Sigmoid colon (tissue), 7 donors: ENCODE measurements at regions of chr1 and their contacts with region 1.

Region 1: DNA sequence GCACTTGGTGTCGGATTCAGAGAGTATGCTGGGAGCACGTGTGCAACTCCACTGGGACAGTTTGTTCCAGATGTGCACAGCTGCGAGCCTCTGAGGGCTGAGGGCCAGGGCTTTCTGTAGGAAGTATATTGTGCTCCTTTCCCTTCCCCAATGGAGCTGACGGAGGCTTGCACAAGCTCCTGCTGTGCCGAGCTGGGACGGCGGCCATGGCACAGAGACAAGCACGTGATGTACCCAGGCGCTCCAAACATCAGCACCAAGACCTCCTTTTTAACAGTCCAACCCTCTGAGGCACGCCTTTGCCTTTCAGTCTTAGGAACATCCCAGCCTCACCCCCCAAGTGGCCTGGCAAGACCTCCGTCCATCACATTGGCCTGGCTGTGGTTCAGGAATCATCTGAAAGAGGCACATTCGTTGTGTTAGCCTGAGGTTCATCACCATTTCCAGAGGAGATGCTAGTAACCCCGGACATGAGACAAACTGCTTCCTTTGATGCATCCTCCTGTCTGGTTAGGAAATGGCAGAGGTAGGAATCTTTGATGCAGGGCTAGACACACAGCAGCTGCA is 339.2 kb upstream of the KAZN start:
- DNase-seq: peak; percentile 97
- H3K4me3 ChIP-seq: no peak overlapping the region
- H3K27ac ChIP-seq: peak overlapping the region; percentile 52 to 57 (median 54)
- H3K4me1 ChIP-seq: peaks cover 0 to 8% (median 0%) of the 10 kb centered on the region in 4 donors
- H3K27me3 ChIP-seq: no peaks in the 10 kb centered on the region
- CTCF ChIP-seq: no peak
- EP300 ChIP-seq: peak in 1 of 4 donors; percentile 2
- POLR2A ChIP-seq: no peak

Region 2: DNA sequence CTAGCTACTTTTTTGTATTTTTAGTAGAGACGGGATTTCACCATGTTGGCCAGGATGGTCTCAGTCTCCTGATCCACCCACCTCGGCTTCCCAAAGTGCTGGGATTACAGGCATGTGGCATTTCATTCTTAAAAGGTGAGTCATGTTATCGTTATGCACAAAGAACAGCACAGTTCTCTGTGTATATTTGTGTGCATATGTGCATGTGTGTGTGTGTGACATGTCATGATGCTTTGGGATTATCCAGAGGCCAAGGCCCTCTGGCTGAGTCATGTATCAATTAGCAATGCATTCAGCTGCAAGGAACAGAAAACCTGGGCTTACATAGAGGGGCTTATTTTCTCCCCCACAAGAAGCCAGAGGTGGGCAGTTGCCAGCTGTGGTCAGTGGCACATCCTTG is 37.5 kb after region 1 on chr1:
- intact Hi-C with region 1: no loop called
- DNase-seq: no peak
- H3K4me3 ChIP-seq: no peak overlapping the region
- H3K27ac ChIP-seq: no peak overlapping the region
- H3K4me1 ChIP-seq: no peaks in the 10 kb centered on the region
- H3K27me3 ChIP-seq: no peaks in the 10 kb centered on the region
- CTCF ChIP-seq: no peak
- EP300 ChIP-seq: no peak
- POLR2A ChIP-seq: no peak

Region 3: GRCh38 chr1:14334336-14335176 is 75.3 kb after region 1 on chr1:
- intact Hi-C with region 1: no loop called
- DNase-seq: no peak
- H3K4me3 ChIP-seq: no peak overlapping the region
- H3K27ac ChIP-seq: no peak overlapping the region
- H3K4me1 ChIP-seq: peaks cover 0 to 6% (median 0%) of the 10 kb centered on the region in 4 donors
- H3K27me3 ChIP-seq: no peaks in the 10 kb centered on the region
- CTCF ChIP-seq: no peak
- EP300 ChIP-seq: no peak
- POLR2A ChIP-seq: no peak

Region 4: DNA sequence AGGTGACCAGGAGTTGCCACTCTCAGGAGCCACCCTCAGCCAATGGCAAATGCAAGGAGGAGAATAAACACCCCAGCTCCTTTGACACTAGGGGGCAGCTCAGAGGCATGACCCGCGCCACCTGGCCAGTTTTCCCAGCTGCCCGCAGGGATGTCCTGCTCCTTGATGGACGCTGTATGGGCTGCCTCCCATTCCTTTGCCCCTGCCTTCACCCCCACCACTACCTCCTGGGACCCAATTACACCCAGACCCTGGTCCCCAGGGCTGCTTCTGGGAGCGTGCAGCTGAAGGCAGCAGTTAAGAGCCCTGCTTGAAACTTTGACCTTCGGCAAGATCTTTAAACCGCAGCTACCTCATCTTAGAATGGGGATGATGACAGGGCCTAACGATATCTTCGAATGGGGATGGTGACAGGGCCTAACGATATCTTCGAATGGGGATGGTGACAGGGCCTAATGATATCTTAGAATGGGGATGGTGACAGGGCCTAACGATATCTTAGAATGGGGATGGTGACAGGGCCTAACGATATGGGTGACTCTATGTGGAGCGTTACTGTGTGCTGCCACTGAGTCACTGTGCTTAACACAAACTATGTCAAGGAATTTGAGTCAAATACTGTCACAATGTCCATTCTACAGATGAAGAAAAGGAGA is 176.2 kb after region 1 on chr1:
- intact Hi-C with region 1: no loop called
- DNase-seq: no peak
- H3K4me3 ChIP-seq: no peak overlapping the region
- H3K27ac ChIP-seq: no peak overlapping the region
- H3K4me1 ChIP-seq: no peaks in the 10 kb centered on the region
- H3K27me3 ChIP-seq: no peaks in the 10 kb centered on the region
- CTCF ChIP-seq: no peak
- EP300 ChIP-seq: no peak
- POLR2A ChIP-seq: no peak

Region 5: DNA sequence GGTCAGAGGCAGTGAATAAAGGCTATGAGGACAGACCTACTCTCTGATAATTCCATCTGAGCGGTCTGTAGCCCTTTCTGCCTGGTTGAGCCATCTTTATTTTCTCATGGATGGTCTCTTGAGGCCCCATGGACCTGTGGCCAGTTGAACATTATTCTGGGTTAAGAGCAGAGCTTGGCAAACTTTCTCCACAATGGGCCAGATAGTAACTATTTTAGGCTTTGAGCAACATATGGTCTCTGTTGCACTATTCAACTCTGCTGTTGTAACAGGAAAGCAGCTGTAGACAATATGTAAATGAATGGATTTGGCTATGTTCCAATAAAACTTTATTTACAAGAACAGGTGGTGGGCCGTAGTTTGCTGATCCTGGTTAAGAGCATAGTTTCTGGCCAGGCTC is 401.9 kb after region 1 on chr1:
- intact Hi-C with region 1: loop called (anchors 5 kb)
- DNase-seq: peak; percentile 72
- H3K4me3 ChIP-seq: no peak overlapping the region
- H3K27ac ChIP-seq: peak overlapping the region; percentile 3 to 53 (median 46)
- H3K4me1 ChIP-seq: no peaks in the 10 kb centered on the region
- H3K27me3 ChIP-seq: no peaks in the 10 kb centered on the region
- CTCF ChIP-seq: no peak
- EP300 ChIP-seq: no peak
- POLR2A ChIP-seq: no peak